Caco-2 (cell line): ENCODE measurements at regions of chr4 and their contacts with region 1.

Region 1: GRCh38 chr4:74932816-74933561 is at the start of gene PARM1:
- DNase-seq: peak; percentile 90 to 91
- H3K4me3 ChIP-seq: peak within 1 kb of the TSS; percentile 66
- H3K4me3 Mint-ChIP-seq: peak within 1 kb of the TSS; percentile 89
- H3K27ac Mint-ChIP-seq: peak within 1 kb of the TSS; percentile 53
- H3K4me1 ChIP-seq: peaks cover 5% of the 10 kb centered on the region; the same call in 1 of the 2 replicates
- H3K4me1 Mint-ChIP-seq: peaks cover 14% of the 10 kb centered on the region
- H3K27me3 ChIP-seq: peaks cover 2% of the 10 kb centered on the region
- H3K27me3 Mint-ChIP-seq: peaks cover 3% of the 10 kb centered on the region
- CTCF ChIP-seq: peak; percentile 79 to 85
- total RNA-seq, gene PARM1: 1.7 and 2.3 TPM in 2 replicates

Region 2: DNA sequence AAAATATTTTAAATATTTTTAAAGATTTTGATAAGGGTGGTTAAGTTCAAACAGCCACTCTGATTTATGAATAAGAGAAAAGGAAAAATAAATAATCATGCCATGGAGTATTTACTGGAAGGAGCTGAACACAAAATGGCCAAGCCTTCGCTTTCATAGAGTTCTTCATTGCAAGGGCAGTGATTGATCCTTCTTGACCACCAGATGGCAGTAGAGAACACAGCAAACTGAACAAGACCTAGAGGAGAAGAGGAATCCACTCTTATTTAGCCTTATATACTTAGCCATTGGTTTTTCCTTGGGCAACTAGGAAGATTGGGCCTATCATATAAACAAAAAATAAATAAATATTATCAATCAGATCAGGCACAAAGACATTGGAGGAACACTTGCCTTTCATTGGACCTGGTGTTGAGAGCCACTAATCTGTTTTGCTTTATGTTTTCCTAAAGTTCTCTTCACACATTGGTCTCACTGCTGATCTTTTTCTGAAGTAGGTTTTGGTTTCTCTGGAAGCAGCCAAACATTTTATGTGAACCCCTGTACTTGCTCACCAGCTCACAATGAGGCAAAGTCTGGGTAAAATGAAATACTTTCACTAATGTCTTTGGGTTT is 58.1 kb before region 1 on chr4:
- CTCF ChIA-PET with region 1: no interaction called
- POLR2A ChIA-PET with region 1: no interaction called
- intact Hi-C with region 1: loop called (anchors 1 kb)
- DNase-seq: peak; percentile 35 to 58
- H3K4me3 ChIP-seq: no peak overlapping the region
- H3K4me3 Mint-ChIP-seq: no peak overlapping the region
- H3K27ac Mint-ChIP-seq: no peak overlapping the region
- H3K4me1 ChIP-seq: no peaks in the 10 kb centered on the region
- H3K4me1 Mint-ChIP-seq: no peaks in the 10 kb centered on the region
- H3K27me3 ChIP-seq: no peaks in the 10 kb centered on the region
- H3K27me3 Mint-ChIP-seq: peaks cover 7% of the 10 kb centered on the region
- CTCF ChIP-seq: peak; percentile 73 to 83

Region 3: GRCh38 chr4:75056277-75056676 is 123.3 kb after region 1 on chr4:
- CTCF ChIA-PET with region 1: no interaction called
- POLR2A ChIA-PET with region 1: no interaction called
- intact Hi-C with region 1: loop called (anchors 2 kb)
- DNase-seq: no peak
- H3K4me3 ChIP-seq: no peak overlapping the region
- H3K4me3 Mint-ChIP-seq: no peak overlapping the region
- H3K27ac Mint-ChIP-seq: no peak overlapping the region
- H3K4me1 ChIP-seq: no peaks in the 10 kb centered on the region
- H3K4me1 Mint-ChIP-seq: no peaks in the 10 kb centered on the region
- H3K27me3 ChIP-seq: no peaks in the 10 kb centered on the region
- H3K27me3 Mint-ChIP-seq: peaks cover 5% of the 10 kb centered on the region
- CTCF ChIP-seq: no peak

Region 4: GRCh38 chr4:75289914-75290582 is 357.1 kb after region 1 on chr4:
- CTCF ChIA-PET with region 1: interaction called, 4 read pairs
- POLR2A ChIA-PET with region 1: no interaction called
- intact Hi-C with region 1: loop called (anchors 2 kb)
- DNase-seq: peak in 1 of 2 experiments; percentile 25
- H3K4me3 ChIP-seq: no peak overlapping the region
- H3K4me3 Mint-ChIP-seq: no peak overlapping the region
- H3K27ac Mint-ChIP-seq: no peak overlapping the region
- H3K4me1 ChIP-seq: peaks cover 8% of the 10 kb centered on the region; the same call in 1 of the 2 replicates
- H3K4me1 Mint-ChIP-seq: peaks cover 15% of the 10 kb centered on the region
- H3K27me3 ChIP-seq: no peaks in the 10 kb centered on the region
- H3K27me3 Mint-ChIP-seq: no peaks in the 10 kb centered on the region
- CTCF ChIP-seq: peak in 1 of 2 experiments; percentile 30

Region 5: DNA sequence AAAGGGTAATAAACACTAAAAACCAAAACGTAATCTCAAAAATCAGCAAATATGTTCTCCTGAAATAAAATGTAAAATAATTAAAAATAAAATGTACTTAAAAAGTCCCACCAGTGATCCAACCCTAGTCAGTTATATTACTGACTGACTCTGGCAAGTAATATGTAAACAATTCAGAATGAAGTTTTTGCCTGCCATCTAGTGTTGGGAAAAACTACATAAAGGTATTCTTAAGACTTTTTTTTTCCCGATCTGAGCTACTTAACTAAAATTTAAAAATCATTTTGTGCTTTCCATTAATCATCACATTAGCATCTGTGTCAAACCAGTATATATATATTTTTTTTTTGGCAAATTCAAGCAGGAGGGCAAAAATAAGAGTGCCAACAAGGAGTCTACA is 557.2 kb after region 1 on chr4:
- CTCF ChIA-PET with region 1: interaction called, 5 read pairs
- POLR2A ChIA-PET with region 1: no interaction called
- intact Hi-C with region 1: loop called (anchors 5 kb)
- DNase-seq: no peak
- H3K4me3 ChIP-seq: no peak overlapping the region
- H3K4me3 Mint-ChIP-seq: no peak overlapping the region
- H3K27ac Mint-ChIP-seq: no peak overlapping the region
- H3K4me1 ChIP-seq: peaks cover 4% of the 10 kb centered on the region
- H3K4me1 Mint-ChIP-seq: no peaks in the 10 kb centered on the region
- H3K27me3 ChIP-seq: no peaks in the 10 kb centered on the region
- H3K27me3 Mint-ChIP-seq: no peaks in the 10 kb centered on the region
- CTCF ChIP-seq: peak; percentile 27 to 39